ENCODE measurements at regions of chr2 and their contacts with region 1.

Region 1: DNA sequence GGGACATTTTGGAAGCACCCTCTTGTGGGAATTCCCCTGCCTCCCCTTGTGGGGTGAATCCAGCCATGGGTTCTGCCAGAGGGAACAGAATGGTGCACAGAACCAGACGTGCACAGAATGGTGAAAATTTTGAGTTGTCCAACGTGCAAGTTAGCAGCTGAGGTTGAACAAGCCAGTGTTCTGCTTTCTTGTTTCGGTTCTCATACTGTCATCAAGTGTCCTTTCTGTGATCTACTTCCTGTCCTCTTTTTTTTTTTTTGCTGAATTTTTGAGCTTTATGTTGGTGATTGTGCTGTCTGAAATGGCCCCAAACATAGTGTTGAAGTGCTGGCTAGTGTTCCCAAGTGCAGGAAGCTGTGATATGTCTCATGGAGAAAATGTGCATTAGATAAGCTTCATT is 21.5 kb upstream of the REEP1 start:
- DNase-seq: no peak
- ATAC-seq: no peak

Region 2: DNA sequence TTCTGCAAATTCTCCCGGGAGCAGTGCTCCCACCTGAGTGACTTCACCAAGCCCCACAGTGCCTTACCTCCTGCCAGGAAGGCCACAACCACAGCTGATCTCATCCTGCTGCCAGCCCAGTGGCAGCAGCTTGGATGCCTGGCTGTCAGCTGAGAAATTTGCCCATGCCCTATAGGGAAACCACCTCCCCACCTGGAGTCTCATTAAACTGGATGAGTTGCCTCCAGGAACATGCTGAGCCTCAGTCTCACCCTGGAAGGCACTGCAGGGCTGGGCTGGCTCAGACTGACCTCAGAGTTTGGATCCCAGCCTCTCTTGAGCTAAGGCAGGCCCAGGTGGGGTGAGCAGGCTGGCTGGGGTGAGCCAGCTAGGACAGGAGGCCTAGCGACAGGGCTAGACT is 44.8 kb before region 1 on chr2:
- intact Hi-C with region 1: loop called (anchors 5 kb)
- DNase-seq: no peak
- ATAC-seq: no peak

Measured in Right ventricle myocardium inferior (tissue), 1 donor.